Psoas muscle (tissue), 8 donors: ENCODE measurements at regions of chr19 and their contacts with region 1.

Region 1: DNA sequence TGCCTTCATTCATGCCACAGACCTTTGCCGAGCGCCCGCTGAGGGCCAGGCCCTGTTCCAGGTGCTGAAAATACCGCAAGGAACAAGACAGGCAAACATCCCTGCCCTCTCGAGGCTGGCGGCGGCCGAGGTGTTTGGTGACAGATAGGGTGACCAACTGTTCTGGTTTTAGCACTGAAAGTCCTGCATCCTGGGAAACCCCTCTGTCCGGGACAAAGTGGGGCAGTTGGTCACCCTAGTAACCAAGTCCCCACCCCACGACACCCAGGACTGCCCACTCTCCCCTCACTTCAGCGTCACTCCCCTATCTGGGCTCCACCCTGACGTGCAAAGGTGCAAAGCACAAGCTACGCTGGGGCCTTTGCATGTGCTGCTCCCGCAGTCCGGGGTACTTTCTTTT is 17.3 kb downstream of the ZBTB7A start:
- DNase-seq: peak; percentile 68 to 91
- ATAC-seq: peak; percentile 75 to 88 (median 83)
- H3K4me3 ChIP-seq: no peak overlapping the region
- H3K27ac ChIP-seq: peak overlapping the region; percentile 85
- H3K4me1 ChIP-seq: peaks cover 34% of the 10 kb centered on the region
- H3K27me3 ChIP-seq: no peaks in the 10 kb centered on the region
- CTCF ChIP-seq: no peak

Region 2: GRCh38 chr19:3966051-3967017 is 83.1 kb before region 1 on chr19:
- intact Hi-C with region 1: no loop called
- DNase-seq: peak in 1 of 2 donors; percentile 25
- ATAC-seq: no peak
- H3K4me3 ChIP-seq: peak overlapping the region; percentile 96
- H3K27ac ChIP-seq: peak overlapping the region; percentile 99
- H3K4me1 ChIP-seq: peaks cover 51% of the 10 kb centered on the region
- H3K27me3 ChIP-seq: no peaks in the 10 kb centered on the region
- CTCF ChIP-seq: no peak

Region 3: GRCh38 chr19:4014541-4015491 is 34.6 kb before region 1 on chr19:
- intact Hi-C with region 1: loop called in 1 of 2 experiments (anchors 5 kb)
- DNase-seq: peak; percentile 55 to 74
- ATAC-seq: peak; percentile 2 to 24 (median 20)
- H3K4me3 ChIP-seq: peak overlapping the region; percentile 54
- H3K27ac ChIP-seq: peak overlapping the region; percentile 64
- H3K4me1 ChIP-seq: peaks cover 63% of the 10 kb centered on the region
- H3K27me3 ChIP-seq: no peaks in the 10 kb centered on the region
- CTCF ChIP-seq: no peak